AG04450 (cell line): ENCODE measurements at regions of chrX and their contacts with region 1.

Region 1: DNA sequence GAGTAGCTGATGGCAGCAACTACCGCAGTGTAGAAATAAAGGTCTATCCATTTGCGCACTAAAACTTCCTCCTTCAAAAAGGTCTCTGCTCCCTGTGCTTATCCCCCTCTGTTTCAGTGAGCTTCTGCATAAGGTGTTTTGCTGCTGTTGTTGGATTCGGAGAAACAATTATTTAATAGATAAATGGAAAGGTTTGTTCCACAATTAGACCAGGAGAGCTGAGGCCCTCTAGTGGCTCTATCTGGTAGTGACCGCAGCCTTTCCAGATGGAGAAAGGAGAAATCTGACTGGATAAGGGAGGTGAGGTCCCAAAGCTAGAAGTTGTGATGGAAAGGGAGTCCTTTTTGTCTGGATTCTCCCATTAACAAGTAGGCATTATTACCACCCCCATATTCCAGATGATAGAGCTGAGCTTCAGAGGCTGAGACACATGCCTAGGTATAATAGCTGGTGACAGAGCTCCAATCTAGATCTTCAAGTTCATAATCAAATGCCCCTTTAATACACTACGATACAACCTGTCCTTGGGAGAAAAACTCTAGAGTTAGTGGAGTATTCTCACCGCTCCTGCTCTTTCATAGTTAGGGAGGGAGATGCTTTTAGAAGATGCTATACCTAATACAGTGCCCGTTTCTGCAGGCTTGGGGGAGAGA is 5.1 kb upstream of the GABRQ start:
- DNase-seq: peak; percentile 6
- H3K4me3 ChIP-seq: no peak overlapping the region
- H3K27ac ChIP-seq: no peak overlapping the region
- H3K27me3 ChIP-seq: no peaks in the 10 kb centered on the region
- CTCF ChIP-seq: peak; percentile 78

Region 2: DNA sequence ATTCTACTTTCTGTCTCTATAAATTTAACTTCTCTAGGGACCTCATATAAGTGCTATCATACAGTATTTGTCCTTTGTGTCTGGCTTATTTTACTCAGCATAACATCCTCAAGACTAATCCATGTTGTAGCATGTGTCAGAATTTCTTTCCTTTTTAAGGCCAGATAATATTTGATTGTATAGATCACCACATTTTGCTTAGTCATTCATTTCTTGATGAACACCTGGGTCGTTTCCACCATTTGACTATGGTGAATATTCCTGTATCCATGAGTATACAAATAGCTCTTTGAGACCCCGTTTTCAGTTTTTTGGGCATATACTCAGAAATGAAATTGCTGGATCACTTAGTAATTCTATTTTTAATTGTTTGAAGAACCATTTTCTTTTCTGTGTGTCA is 886.1 kb before region 1 on chrX:
- CTCF ChIA-PET with region 1: interaction called, 157 read pairs
- POLR2A ChIA-PET with region 1: no interaction called
- DNase-seq: no peak
- H3K4me3 ChIP-seq: no peak overlapping the region
- H3K27ac ChIP-seq: no peak overlapping the region
- H3K27me3 ChIP-seq: peaks cover 2% of the 10 kb centered on the region
- CTCF ChIP-seq: no peak

Region 3: GRCh38 chrX:151753313-151754041 is 879.1 kb before region 1 on chrX:
- CTCF ChIA-PET with region 1: interaction called, 157 read pairs
- POLR2A ChIA-PET with region 1: no interaction called
- DNase-seq: peak; percentile 1
- H3K4me3 ChIP-seq: no peak overlapping the region
- H3K27ac ChIP-seq: no peak overlapping the region
- H3K27me3 ChIP-seq: no peaks in the 10 kb centered on the region
- CTCF ChIP-seq: peak; percentile 58

Region 4: GRCh38 chrX:151825927-151826481 is 806.6 kb before region 1 on chrX:
- CTCF ChIA-PET with region 1: interaction called, 23 read pairs
- POLR2A ChIA-PET with region 1: no interaction called
- DNase-seq: peak; percentile 34
- H3K4me3 ChIP-seq: no peak overlapping the region
- H3K27ac ChIP-seq: peak overlapping the region; percentile 61
- H3K27me3 ChIP-seq: peaks cover 2% of the 10 kb centered on the region
- CTCF ChIP-seq: peak; percentile 42

Region 5: DNA sequence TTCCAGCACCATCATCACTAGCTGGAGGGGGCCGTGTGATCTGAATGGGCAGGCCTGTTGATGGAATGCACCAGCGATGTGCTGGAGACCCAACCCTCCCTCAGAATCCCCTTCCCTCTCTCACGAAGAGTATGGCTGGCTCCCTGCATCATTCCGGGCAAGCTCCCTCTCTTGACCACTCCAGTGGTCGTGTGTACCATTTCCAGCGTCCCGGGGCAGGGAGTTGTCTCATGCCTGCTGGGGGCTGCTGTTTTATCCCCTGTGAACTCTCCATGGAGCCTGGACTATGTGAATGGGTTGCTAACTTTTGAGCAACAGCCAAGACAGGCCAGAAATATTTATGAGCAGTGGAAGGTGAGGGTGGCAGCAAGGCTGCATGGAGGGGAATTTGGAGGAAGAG is 92.8 kb after region 1 on chrX:
- CTCF ChIA-PET with region 1: no interaction called
- POLR2A ChIA-PET with region 1: no interaction called
- DNase-seq: no peak
- H3K4me3 ChIP-seq: no peak overlapping the region
- H3K27ac ChIP-seq: no peak overlapping the region
- H3K27me3 ChIP-seq: no peaks in the 10 kb centered on the region
- CTCF ChIP-seq: no peak